CD4-positive, alpha-beta T cell (primary cell): ENCODE measurements at regions of chr15 and their contacts with region 1.

Region 1: GRCh38 chr15:60916679-60917460 is 312.2 kb downstream of the RORA start:
- DNase-seq: peak; percentile 76 to 96 (median 84)
- ATAC-seq: peak; percentile 98
- H3K4me3 ChIP-seq: no peak overlapping the region
- H3K4me3 Mint-ChIP-seq: no peak overlapping the region
- H3K27ac ChIP-seq: no peak overlapping the region
- H3K27ac Mint-ChIP-seq: peak overlapping the region; percentile 50
- H3K4me1 ChIP-seq: peaks cover 12% of the 10 kb centered on the region
- H3K4me1 Mint-ChIP-seq: peaks cover 17% of the 10 kb centered on the region
- H3K27me3 ChIP-seq: no peaks in the 10 kb centered on the region
- H3K27me3 Mint-ChIP-seq: no peaks in the 10 kb centered on the region
- CTCF ChIP-seq: peak; percentile 84

Region 2: DNA sequence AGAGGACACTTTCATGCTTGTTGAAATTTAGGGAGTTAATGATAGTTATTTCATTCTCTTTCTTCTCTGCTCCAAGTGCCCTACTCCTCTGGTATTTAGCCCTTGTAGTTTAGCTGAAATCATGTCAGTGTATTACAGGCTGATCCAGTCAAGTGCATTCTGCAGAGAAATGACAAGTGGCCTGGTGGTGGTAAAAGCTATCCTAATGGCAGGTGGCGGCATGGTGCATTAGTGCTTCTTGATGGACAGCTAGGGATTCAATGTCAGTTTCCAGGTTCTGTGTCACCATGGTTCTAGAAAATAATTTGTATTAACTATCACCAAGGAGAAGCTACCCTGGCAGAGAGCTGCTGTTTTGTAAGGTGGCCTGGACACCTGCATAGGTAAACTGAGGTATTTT is 1137.8 kb before region 1 on chr15:
- CTCF ChIA-PET with region 1: no interaction called
- POLR2A ChIA-PET with region 1: no interaction called
- intact Hi-C with region 1: loop called in 1 of 2 experiments (anchors 10 kb)
- DNase-seq: no peak
- ATAC-seq: no peak
- H3K4me3 ChIP-seq: no peak overlapping the region
- H3K4me3 Mint-ChIP-seq: no peak overlapping the region
- H3K27ac ChIP-seq: no peak overlapping the region
- H3K27ac Mint-ChIP-seq: no peak overlapping the region
- H3K4me1 ChIP-seq: peaks cover 5% of the 10 kb centered on the region
- H3K4me1 Mint-ChIP-seq: peaks cover 7% of the 10 kb centered on the region
- H3K27me3 ChIP-seq: no peaks in the 10 kb centered on the region
- H3K27me3 Mint-ChIP-seq: no peaks in the 10 kb centered on the region
- CTCF ChIP-seq: no peak

Region 3: DNA sequence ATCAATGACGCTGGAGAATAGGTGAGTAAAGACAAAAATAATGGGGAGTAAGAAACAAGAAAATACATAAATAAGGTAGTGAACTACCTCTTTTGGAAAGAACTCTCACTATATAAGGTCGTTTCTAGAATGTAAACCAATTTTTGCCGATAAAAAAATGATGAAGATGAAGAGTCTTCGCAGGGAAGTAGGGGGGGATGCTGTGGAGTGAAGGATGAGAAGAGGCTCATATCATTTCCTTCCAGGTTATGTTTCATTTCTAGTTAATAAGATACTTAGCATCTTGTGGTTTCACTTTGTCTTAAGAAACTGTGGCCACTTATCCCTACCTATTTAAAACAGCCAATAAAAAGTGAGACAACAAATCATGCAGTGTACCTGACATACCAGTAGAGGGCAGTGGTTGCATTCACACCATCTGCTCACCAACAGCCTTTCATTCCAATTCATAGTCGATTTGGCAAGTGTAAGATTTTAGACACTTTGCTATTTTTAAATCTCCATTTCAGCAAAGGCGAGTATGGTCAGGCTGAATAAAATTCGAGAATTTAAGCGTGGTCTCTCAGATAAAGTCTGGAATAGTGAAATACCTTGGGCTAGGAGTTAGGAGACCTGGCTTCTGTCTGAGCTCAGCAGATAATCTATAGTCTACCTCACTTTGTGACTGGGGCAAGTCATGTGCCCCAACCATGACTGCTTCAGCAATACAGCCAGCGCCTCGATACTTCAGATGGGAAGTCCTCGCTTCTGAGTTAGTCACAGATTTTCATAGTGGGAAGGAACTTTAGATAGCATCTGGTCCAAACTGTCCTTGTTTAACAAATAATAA is 409.1 kb before region 1 on chr15:
- CTCF ChIA-PET with region 1: interaction called, 10 read pairs
- POLR2A ChIA-PET with region 1: interaction called, 5 read pairs
- intact Hi-C with region 1: loop called (anchors 1 kb)
- DNase-seq: peak in 12 of 14 experiments; percentile 14 to 89 (median 43)
- ATAC-seq: peak; percentile 87
- H3K4me3 ChIP-seq: no peak overlapping the region
- H3K4me3 Mint-ChIP-seq: peak overlapping the region; percentile 1
- H3K27ac ChIP-seq: peak overlapping the region in 1 of 2 donors; percentile 14
- H3K27ac Mint-ChIP-seq: peak overlapping the region; percentile 84
- H3K4me1 ChIP-seq: peaks cover 19% of the 10 kb centered on the region
- H3K4me1 Mint-ChIP-seq: peaks cover 58% of the 10 kb centered on the region
- H3K27me3 ChIP-seq: no peaks in the 10 kb centered on the region
- H3K27me3 Mint-ChIP-seq: no peaks in the 10 kb centered on the region
- CTCF ChIP-seq: peak; percentile 87

Region 4: GRCh38 chr15:60649845-60650548 is 266.9 kb before region 1 on chr15:
- CTCF ChIA-PET with region 1: interaction called, 3 read pairs
- POLR2A ChIA-PET with region 1: interaction called, 8 read pairs
- intact Hi-C with region 1: loop called in 1 of 2 experiments (anchors 5 kb)
- DNase-seq: peak in 9 of 14 experiments; percentile 4 to 87 (median 11)
- ATAC-seq: peak; percentile 84
- H3K4me3 ChIP-seq: peak overlapping the region; percentile 15
- H3K4me3 Mint-ChIP-seq: peak overlapping the region; percentile 58
- H3K27ac ChIP-seq: peak overlapping the region in 1 of 2 donors; percentile 59
- H3K27ac Mint-ChIP-seq: peak overlapping the region; percentile 79
- H3K4me1 ChIP-seq: peaks cover 30% of the 10 kb centered on the region
- H3K4me1 Mint-ChIP-seq: peaks cover 46% of the 10 kb centered on the region
- H3K27me3 ChIP-seq: no peaks in the 10 kb centered on the region
- H3K27me3 Mint-ChIP-seq: no peaks in the 10 kb centered on the region
- CTCF ChIP-seq: no peak

Region 5: DNA sequence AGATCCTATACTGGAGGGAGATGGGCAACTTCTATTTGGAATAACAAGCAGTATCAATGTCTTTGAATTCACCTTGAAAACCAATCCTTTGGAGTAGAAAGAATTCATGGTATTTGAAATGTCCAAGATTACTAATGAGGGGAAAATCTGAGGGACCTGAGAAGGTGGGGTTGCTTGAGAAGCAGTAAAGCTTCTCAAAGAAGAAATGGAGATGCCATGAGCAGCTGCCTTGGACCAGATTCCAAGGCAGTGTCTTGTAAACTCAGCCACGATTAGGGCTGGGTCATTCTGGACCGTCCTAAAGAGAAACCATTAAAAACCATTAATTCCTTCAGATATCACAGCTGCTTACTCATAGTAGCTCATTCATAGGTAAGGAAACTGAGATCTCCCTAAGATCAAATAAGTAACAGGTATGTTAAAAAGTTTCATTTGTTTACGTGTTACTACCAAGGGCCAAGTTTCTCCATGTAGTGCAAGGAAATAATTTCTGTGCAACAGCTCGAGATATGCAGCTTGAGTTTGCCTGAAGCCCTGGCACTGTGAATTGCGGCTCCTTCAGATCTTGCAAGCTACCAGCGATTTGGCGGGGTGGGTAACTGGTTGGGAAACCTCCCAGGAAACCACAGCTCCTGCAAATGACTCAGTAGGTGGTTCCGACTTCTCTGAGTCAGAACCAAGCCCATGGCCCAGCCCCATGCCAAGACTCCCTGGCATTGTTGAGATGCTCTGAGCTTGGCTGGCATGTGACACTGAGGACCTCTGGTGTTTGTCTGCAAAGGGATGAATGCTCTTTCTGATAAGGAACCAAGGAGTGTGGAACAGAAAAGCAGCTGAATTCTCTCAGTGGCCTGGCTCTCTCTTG is 15.4 kb after region 1 on chr15:
- CTCF ChIA-PET with region 1: interaction called, 13 read pairs
- POLR2A ChIA-PET with region 1: interaction called, 4 read pairs
- intact Hi-C with region 1: no loop called
- DNase-seq: peak; percentile 25 to 86 (median 55)
- ATAC-seq: peak; percentile 92
- H3K4me3 ChIP-seq: no peak overlapping the region
- H3K4me3 Mint-ChIP-seq: no peak overlapping the region
- H3K27ac ChIP-seq: no peak overlapping the region
- H3K27ac Mint-ChIP-seq: no peak overlapping the region
- H3K4me1 ChIP-seq: peaks cover 7% of the 10 kb centered on the region
- H3K4me1 Mint-ChIP-seq: peaks cover 11% of the 10 kb centered on the region
- H3K27me3 ChIP-seq: no peaks in the 10 kb centered on the region
- H3K27me3 Mint-ChIP-seq: no peaks in the 10 kb centered on the region
- CTCF ChIP-seq: no peak